Heart right ventricle (tissue), 16 donors: ENCODE measurements at regions of chr6 and their contacts with region 1.

Region 1: GRCh38 chr6:142952614-142953013 is 7.6 kb upstream of the HIVEP2 start:
- DNase-seq: no peak
- ATAC-seq: no peak
- H3K4me3 ChIP-seq: no peak overlapping the region
- H3K27ac ChIP-seq: no peak overlapping the region
- H3K4me1 ChIP-seq: peaks cover 0 to 13% (median 7%) of the 10 kb centered on the region in 9 donors
- H3K27me3 ChIP-seq: no peaks in the 10 kb centered on the region
- CTCF ChIP-seq: no peak

Region 2: GRCh38 chr6:143015300-143015706 is 62.7 kb after region 1 on chr6:
- intact Hi-C with region 1: loop called in 2 of 10 experiments (anchors 5 kb)
- DNase-seq: no peak
- ATAC-seq: no peak
- H3K4me3 ChIP-seq: no peak overlapping the region
- H3K27ac ChIP-seq: no peak overlapping the region
- H3K4me1 ChIP-seq: no peaks in the 10 kb centered on the region
- H3K27me3 ChIP-seq: no peaks in the 10 kb centered on the region
- CTCF ChIP-seq: no peak

Region 3: GRCh38 chr6:143026696-143027449 is 74.3 kb after region 1 on chr6:
- intact Hi-C with region 1: loop called in 3 of 10 experiments (anchors 5 kb)
- DNase-seq: peak; percentile 26 to 27
- ATAC-seq: peak in 6 of 8 donors; percentile 55 to 78 (median 60)
- H3K4me3 ChIP-seq: no peak overlapping the region
- H3K27ac ChIP-seq: no peak overlapping the region
- H3K4me1 ChIP-seq: no peaks in the 10 kb centered on the region
- H3K27me3 ChIP-seq: no peaks in the 10 kb centered on the region
- CTCF ChIP-seq: peak; percentile 47 to 78 (median 70)